Activated CD4-positive, alpha-beta T cell treated with anti-CD3 and anti-CD28 coated beads, Interleukin-2, amount 10 ng/mL, durations not matched to agents 24 days and 14 days (primary cell): ENCODE measurements at regions of chr7 and their contacts with region 1.

Region 1: DNA sequence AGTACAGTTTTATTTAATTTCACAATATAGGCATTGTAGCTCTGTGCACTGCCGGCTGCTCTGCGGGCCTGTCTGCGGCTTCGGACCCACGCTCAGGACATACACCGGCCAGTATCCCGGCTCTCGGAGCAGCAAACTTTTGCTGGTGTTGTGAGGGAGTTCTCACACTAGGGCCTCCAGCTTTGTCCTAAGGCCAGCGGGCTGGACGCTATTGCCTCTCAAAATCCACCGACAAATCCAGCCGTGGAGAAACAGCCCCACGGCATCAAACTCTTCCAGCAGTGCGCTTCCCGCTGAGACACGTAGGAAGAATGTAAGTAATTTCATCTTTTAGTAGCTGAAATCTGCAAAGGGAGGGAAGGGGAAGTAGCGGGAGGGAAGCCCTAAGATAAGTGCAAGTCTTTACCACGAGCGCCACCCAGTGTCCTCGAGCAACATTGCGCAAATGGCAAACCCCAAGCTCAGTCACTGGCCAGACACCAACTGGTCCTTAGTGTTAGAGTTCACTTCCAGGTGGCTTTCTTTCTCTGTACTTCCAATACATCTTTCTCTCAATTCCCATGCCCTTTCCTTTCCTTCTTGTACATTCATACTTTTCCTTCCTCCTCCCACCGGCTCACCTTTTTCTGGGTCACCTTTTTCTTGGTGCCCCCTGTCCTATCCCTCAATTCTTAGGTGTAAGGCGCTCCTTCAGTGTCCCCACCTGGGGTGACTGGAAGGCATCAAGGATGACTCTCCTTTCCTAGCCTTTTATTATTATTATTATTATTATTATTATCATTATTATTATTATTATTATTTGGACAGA is 3.0 kb upstream of the DLX5 start:
- DNase-seq: peak; percentile 88
- H3K4me3 Mint-ChIP-seq: peak overlapping the region; percentile 41
- H3K27ac Mint-ChIP-seq: no peak overlapping the region
- H3K4me1 Mint-ChIP-seq: peaks cover 17% of the 10 kb centered on the region
- H3K27me3 Mint-ChIP-seq: peaks cover 63% of the 10 kb centered on the region

Region 2: GRCh38 chr7:95916573-95917297 is 1110.9 kb before region 1 on chr7:
- intact Hi-C with region 1: loop called (anchors 1 kb)
- DNase-seq: peak; percentile 90
- H3K4me3 Mint-ChIP-seq: no peak overlapping the region
- H3K27ac Mint-ChIP-seq: no peak overlapping the region
- H3K4me1 Mint-ChIP-seq: peaks cover 7% of the 10 kb centered on the region
- H3K27me3 Mint-ChIP-seq: peaks cover 15% of the 10 kb centered on the region

Region 3: GRCh38 chr7:96414931-96415292 is 612.7 kb before region 1 on chr7:
- intact Hi-C with region 1: loop called (anchors 2 kb)
- DNase-seq: peak; percentile 88
- H3K4me3 Mint-ChIP-seq: no peak overlapping the region
- H3K27ac Mint-ChIP-seq: no peak overlapping the region
- H3K4me1 Mint-ChIP-seq: peaks cover 3% of the 10 kb centered on the region
- H3K27me3 Mint-ChIP-seq: peaks cover 18% of the 10 kb centered on the region

Region 4: GRCh38 chr7:96663442-96663841 is 364.2 kb before region 1 on chr7:
- intact Hi-C with region 1: no loop called
- DNase-seq: no peak
- H3K4me3 Mint-ChIP-seq: no peak overlapping the region
- H3K27ac Mint-ChIP-seq: no peak overlapping the region
- H3K4me1 Mint-ChIP-seq: peaks cover 9% of the 10 kb centered on the region
- H3K27me3 Mint-ChIP-seq: no peaks in the 10 kb centered on the region

Region 5: GRCh38 chr7:96837593-96837992 is 190.0 kb before region 1 on chr7:
- intact Hi-C with region 1: no loop called
- DNase-seq: peak; percentile 83
- H3K4me3 Mint-ChIP-seq: peak overlapping the region; percentile 50
- H3K27ac Mint-ChIP-seq: no peak overlapping the region
- H3K4me1 Mint-ChIP-seq: peaks cover 17% of the 10 kb centered on the region
- H3K27me3 Mint-ChIP-seq: peaks cover 50% of the 10 kb centered on the region

Region 6: DNA sequence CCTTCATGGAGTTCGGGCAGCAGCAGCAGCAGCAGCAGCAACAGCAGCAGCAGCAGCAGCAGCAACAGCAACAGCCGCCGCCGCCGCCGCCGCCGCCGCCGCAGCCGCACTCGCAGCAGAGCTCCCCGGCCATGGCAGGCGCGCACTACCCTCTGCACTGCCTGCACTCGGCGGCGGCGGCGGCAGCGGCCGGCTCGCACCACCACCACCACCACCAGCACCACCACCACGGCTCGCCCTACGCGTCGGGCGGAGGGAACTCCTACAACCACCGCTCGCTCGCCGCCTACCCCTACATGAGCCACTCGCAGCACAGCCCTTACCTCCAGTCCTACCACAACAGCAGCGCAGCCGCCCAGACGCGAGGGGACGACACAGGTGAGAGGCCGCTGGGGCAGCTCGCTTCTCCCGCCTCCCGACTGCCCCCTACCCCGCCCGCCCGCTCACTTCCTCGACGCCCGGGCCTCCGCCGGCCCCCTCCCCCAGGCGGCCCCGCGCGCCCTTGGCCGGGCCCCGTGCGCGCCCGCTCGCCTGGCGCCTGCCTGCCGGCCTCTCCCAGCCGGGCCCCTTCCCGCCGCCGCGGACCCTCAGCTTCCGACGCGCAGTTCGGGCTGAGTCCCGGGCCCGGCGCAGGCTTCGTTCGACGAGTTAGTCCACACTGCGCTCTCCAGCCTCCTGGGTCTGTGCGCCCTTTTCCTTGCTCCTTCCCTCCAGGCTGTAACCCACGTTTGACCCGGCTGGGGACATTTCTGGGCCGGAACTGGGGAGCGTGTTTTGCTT is 21.4 kb before region 1 on chr7:
- intact Hi-C with region 1: loop called (anchors 1 kb)
- DNase-seq: peak; percentile 73
- H3K4me3 Mint-ChIP-seq: peak overlapping the region; percentile 73
- H3K27ac Mint-ChIP-seq: peak overlapping the region; percentile 34
- H3K4me1 Mint-ChIP-seq: peaks cover 8% of the 10 kb centered on the region
- H3K27me3 Mint-ChIP-seq: peaks cover 80% of the 10 kb centered on the region

Region 7: DNA sequence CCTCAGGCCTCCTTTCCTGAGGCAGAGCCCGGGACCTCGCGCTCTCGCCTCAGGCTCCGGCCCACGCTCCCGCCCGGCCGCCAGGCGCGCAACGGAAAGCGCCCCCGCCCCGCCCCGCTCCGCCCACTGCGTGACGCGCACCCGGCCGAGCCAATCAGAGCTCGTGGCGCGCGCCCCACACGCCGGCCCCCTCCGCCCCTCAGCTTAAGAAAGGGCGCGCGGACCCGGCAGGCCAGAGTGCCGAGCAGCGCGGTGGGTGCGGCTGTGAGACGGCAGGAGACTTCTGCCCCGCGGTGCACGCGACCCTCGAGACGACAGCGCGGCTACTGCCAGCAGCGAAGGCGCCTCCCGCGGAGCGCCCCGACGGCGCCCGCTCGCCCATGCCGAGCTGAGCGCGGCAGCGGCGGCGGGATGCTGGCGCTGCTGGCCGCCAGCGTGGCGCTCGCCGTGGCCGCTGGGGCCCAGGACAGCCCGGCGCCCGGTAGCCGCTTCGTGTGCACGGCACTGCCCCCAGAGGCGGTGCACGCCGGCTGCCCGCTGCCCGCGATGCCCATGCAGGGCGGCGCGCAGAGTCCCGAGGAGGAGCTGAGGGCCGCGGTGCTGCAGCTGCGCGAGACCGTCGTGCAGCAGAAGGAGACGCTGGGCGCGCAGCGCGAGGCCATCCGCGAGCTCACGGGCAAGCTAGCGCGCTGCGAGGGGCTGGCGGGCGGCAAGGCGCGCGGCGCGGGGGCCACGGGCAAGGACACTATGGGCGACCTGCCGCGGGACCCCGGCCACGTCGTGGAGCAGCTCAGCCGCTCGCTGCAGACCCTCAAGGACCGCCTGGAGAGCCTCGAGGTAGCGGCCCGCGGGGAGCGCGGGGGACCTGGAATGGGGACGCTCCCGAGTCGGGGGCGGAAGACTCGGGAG is 1589.7 kb after region 1 on chr7 and contains the start of gene NPTX2:
- intact Hi-C with region 1: loop called (anchors 10 kb)
- DNase-seq: peak; percentile 57
- H3K4me3 Mint-ChIP-seq: no peak within 1 kb of the TSS
- H3K27ac Mint-ChIP-seq: no peak within 1 kb of the TSS
- H3K4me1 Mint-ChIP-seq: no peaks in the 10 kb centered on the region
- H3K27me3 Mint-ChIP-seq: peaks cover 38% of the 10 kb centered on the region
- total RNA-seq, gene NPTX2: not detected in 2 replicates